ENCODE measurements at regions of chr18 and their contacts with region 1.

Region 1: GRCh38 chr18:42053188-42053781 is 98.3 kb downstream of the PIK3C3 start:
- DNase-seq: no peak
- H3K4me3 ChIP-seq: no peak overlapping the region
- H3K27ac ChIP-seq: no peak overlapping the region
- H3K27me3 ChIP-seq: no peaks in the 10 kb centered on the region
- CTCF ChIP-seq: peak; percentile 88

Region 2: DNA sequence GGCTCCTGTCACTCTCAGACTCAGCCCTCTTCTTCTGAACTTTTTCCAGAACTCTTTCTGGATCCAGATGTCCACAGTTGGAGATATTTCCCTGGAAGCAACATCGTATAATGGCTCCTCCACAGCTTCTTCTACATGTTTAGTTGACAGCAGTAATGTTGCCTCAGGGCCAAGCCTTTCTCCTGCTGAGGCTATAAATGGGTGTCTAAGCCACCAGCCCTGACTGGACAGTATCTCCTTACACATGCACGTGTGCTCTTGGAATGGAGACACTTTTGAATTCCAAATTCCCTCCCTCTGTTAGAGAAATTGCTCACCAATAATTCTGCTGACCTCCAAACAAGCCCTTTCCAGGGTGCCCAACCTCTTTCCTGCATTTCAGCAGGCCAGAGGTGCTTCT is 254.4 kb before region 1 on chr18:
- CTCF ChIA-PET with region 1: no interaction called
- POLR2A ChIA-PET with region 1: no interaction called
- DNase-seq: no peak
- H3K4me3 ChIP-seq: no peak overlapping the region
- H3K27ac ChIP-seq: no peak overlapping the region
- H3K27me3 ChIP-seq: no peaks in the 10 kb centered on the region
- CTCF ChIP-seq: no peak

Region 3: DNA sequence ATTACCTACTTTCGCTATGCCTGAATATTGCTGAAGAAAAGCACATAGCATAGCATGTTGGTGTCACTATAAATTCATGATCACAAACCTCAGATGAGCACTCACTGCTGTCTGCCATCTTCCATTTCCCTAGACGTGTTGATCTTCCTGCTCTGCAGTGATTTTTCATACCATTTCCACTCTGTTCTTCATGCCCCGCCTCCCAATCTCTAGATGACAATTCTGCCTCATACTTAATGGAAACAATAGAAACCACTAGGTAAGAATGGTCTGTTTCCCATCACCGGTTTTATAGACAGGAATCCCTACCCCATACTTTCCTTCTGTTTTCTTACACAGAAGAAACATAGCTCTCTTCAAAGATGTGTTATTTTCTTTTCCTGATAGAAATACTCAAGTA is 34.5 kb before region 1 on chr18:
- CTCF ChIA-PET with region 1: interaction called, 19 read pairs
- POLR2A ChIA-PET with region 1: no interaction called
- DNase-seq: no peak
- H3K4me3 ChIP-seq: no peak overlapping the region
- H3K27ac ChIP-seq: no peak overlapping the region
- H3K27me3 ChIP-seq: no peaks in the 10 kb centered on the region
- CTCF ChIP-seq: no peak

Region 4: GRCh38 chr18:42038936-42039335 is 14.3 kb before region 1 on chr18:
- CTCF ChIA-PET with region 1: interaction called, 94 read pairs
- POLR2A ChIA-PET with region 1: no interaction called
- DNase-seq: peak; percentile 86
- H3K4me3 ChIP-seq: no peak overlapping the region
- H3K27ac ChIP-seq: no peak overlapping the region
- H3K27me3 ChIP-seq: no peaks in the 10 kb centered on the region
- CTCF ChIP-seq: no peak

Region 5: DNA sequence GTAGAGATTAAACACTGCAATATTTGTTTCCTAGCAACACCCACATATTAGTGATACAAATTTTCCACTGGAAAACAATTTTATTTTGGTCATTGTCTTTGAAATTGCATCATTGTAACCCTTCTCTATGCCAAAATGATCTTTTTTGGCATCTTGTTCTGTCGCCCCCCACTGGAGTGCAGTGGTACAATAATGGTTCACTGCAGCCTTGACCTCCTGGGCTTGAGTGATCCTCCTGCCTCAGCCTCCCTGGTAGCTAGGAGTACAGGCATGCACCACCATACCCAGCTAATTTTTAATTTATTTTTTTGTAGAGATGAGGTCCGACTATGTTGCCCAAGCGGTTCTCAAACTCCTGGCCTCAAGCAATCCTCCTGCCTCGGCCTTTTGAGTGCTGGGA is 19.1 kb after region 1 on chr18:
- CTCF ChIA-PET with region 1: interaction called, 181 read pairs
- POLR2A ChIA-PET with region 1: no interaction called
- DNase-seq: no peak
- H3K4me3 ChIP-seq: no peak overlapping the region
- H3K27ac ChIP-seq: no peak overlapping the region
- H3K27me3 ChIP-seq: no peaks in the 10 kb centered on the region
- CTCF ChIP-seq: 0 out of 2 replicates have a peak, but pooled peaks have one; percentile 6

Region 6: DNA sequence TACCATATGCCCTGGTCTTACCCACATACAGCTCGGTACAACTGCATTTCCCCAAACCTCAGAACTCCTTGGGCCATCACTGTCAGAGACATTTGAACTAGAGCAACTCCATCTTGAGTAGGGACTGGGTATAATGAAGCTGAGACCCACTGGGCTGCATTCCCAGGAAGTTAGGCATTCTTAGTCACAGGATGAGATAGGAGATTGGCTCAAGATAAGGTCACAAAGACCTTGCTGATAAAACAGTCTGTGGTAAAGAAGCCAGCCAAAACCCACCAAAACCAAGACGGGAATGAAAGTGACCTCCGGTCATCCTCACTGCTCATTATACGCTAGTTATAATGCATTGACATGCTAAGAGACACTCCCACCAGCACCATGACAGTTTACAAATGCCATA is 33.0 kb after region 1 on chr18:
- CTCF ChIA-PET with region 1: interaction called, 36 read pairs
- POLR2A ChIA-PET with region 1: interaction called, 3 read pairs
- DNase-seq: no peak
- H3K4me3 ChIP-seq: no peak overlapping the region
- H3K27ac ChIP-seq: no peak overlapping the region
- H3K27me3 ChIP-seq: no peaks in the 10 kb centered on the region
- CTCF ChIP-seq: no peak

Region 7: DNA sequence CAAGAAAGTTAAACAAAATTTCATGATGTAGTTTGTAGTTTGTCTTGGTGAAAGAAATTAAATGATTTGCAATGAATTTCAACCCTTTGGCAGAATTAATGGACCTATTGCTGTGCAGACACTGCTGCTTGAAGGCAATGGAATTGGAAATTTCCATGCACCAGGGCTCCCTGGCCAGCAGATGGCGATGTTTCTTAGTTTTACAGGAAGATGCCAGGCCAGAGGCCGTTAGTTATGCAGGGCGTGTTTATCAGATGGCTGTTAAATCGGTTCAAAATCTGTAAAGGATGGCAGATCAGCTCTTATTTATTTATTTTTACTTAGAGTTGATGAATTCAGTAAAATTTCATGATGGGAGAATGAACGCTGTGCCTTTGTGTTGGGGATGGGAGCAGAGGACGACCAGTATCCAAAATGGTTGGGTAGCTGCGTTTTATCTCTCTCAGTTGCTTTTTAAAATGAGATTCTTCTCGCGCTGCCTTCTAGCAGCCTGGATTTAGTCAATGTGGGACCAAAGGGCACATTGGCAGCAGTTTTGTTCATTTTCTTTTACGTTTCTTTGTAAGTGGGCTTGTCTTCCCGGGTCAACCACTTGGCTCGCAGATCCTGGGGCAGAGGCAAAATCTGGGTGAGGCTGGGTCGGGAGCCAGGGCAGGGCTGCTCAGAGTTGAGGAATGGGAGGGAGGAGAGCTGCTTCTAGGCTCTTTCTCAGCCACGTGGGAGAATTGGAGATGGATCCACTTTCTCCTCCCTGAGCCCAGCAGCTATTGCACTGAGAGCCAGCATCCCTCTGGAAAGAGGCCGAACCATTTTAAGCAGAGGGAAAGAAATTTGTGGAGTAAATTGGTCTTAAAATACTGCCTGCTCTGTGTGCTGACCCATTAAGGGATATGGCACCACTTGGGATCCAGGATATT is 245.7 kb after region 1 on chr18:
- CTCF ChIA-PET with region 1: interaction called, 19 read pairs
- POLR2A ChIA-PET with region 1: no interaction called
- DNase-seq: peak; percentile 33
- H3K4me3 ChIP-seq: no peak overlapping the region
- H3K27ac ChIP-seq: no peak overlapping the region
- H3K27me3 ChIP-seq: no peaks in the 10 kb centered on the region
- CTCF ChIP-seq: peak; percentile 88